Activated T-helper 1 cell treated with anti-CD3 and anti-CD28 coated beads, Interleukin-12 subunit alpha, Interleukin-12 subunit beta, Interleukin-2, Interleukin-4 antibody, amounts not matched to agents 30 ng/mL and 10 ng/mL and 1 ng/mL, durations not matched to agents 14 hours and 24 hours and 36 hours (primary cell): ENCODE measurements at regions of chr14 and their contacts with region 1.

Region 1: DNA sequence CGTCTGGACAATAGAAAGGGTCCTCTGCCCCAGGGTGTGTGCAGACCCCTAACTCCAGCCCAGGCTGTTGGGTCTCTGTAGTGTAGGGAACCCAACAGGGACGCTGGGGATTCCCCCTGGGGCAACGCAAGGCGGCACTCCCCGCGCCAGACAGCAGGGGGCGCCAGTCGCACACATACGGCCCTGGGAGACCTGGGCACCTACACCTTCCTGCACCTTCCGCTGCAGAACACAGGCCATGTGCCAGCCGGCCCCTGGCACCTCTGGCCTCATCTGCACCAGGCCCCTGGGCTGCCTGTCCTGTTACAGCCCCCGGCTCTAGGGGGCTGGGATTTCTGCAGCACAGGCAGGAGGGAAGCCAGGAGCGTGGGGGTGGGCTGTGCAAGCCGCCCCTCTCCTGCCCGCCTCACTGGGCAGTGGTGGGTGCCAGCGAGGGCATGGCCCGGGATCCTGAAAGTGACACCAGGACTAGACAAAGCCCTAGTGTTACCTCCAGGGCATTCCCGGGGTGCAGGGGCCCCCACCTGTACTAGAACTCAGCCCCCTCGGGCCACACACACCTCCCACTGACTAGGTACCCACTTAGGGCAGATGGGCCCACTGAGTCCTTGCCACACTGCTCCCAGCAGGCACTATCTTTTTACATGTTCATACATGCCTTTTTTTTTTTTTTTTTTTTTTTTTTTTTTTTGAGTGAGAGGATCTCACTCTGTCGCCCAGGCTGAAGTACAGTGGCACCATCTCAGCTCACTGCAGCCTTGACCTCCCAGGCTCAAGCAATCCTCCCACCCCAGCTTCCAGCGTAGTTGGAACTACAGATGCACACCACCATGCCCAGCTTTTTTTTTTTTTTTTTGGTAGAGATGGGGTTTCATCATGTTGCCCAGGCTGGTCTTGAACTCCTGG is 37.5 kb downstream of the CCNK start:
- DNase-seq: peak; percentile 71
- H3K4me3 Mint-ChIP-seq: no peak overlapping the region
- H3K27ac Mint-ChIP-seq: no peak overlapping the region
- H3K4me1 Mint-ChIP-seq: no peaks in the 10 kb centered on the region
- H3K27me3 Mint-ChIP-seq: no peaks in the 10 kb centered on the region

Region 2: DNA sequence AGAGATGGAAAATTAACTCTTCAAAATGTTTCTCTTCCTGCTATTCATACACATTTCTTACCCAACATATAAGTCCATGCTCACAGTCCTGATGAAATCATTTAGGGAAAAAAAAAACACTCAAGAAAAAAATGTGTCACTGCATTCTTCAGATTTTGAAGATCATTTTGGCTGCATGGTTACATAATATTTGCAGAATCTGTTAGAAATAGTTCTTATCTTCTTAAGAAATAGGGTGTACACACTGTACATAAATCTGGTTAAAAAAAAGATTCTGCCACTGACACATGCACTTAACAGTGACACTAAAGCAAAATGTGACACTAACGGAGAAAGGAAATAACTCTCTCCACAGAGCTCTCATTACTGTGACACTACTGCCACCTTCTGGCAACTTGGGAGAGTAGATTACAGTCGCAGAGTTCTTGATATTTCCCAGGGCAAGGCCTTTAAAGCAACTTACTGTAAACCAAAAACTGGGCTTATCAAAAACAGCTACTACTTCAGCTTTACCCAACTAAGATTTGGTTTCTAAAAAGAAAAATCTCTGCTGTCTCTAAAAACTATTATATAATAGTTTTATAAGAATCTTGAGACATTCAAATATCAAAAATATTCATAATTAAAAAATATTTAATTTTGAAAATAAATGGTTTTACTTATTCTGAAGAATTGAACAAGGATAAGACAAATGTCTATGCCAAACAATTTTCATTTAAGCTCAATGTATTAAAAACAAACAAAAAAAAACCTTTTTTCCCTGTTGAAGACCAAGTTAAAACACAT is 103.0 kb before region 1 on chr14:
- intact Hi-C with region 1: no loop called
- DNase-seq: peak; percentile 55
- H3K4me3 Mint-ChIP-seq: no peak overlapping the region
- H3K27ac Mint-ChIP-seq: no peak overlapping the region
- H3K4me1 Mint-ChIP-seq: peaks cover 26% of the 10 kb centered on the region
- H3K27me3 Mint-ChIP-seq: no peaks in the 10 kb centered on the region

Region 3: DNA sequence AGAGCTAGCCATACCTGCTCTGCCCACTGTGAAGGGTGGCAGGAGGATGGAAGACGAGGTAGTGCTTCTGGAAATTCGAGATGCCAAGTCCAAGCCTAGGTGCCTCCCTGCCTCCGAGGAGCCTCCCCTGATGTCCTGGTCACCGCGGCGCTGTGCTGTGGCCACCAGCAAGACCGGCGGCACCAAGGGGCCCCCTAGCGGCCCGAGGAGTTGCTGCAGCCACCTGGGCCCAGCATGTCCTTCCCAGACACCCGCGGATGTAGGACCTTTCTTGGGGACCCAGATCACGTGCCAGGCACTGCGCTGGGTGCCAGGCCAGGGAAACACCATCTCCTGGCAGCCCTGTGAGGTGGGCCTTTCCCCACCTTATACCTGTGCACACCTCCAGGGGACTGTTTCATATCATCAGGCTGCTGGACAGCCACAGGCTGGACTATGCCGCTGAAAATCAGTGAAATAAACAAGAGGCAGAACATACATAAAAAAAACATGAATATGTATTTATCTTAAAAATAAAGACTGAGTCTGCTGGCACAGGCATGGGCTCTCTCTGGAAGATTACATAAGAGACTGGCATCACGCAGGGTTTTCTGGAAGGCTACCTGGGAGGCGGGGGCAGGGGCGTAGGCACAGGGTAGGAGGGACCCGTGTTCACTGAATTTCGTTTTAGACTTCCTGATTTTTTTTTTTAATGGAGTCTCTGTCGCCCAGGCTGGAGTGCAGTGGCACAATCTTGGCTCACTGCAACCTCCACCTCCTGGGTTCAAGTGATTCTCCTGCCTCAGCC is 110.3 kb after region 1 on chr14:
- intact Hi-C with region 1: loop called (anchors 1 kb)
- DNase-seq: peak; percentile 43
- H3K4me3 Mint-ChIP-seq: no peak overlapping the region
- H3K27ac Mint-ChIP-seq: no peak overlapping the region
- H3K4me1 Mint-ChIP-seq: peaks cover 4% of the 10 kb centered on the region
- H3K27me3 Mint-ChIP-seq: no peaks in the 10 kb centered on the region

Region 4: GRCh38 chr14:99884834-99885648 is 366.3 kb after region 1 on chr14:
- intact Hi-C with region 1: loop called (anchors 1 kb)
- DNase-seq: no peak
- H3K4me3 Mint-ChIP-seq: no peak overlapping the region
- H3K27ac Mint-ChIP-seq: no peak overlapping the region
- H3K4me1 Mint-ChIP-seq: no peaks in the 10 kb centered on the region
- H3K27me3 Mint-ChIP-seq: peaks cover 8% of the 10 kb centered on the region